Adrenal gland (tissue), 19 donors: ENCODE measurements at regions of chr11 and their contacts with region 1.

Region 1: DNA sequence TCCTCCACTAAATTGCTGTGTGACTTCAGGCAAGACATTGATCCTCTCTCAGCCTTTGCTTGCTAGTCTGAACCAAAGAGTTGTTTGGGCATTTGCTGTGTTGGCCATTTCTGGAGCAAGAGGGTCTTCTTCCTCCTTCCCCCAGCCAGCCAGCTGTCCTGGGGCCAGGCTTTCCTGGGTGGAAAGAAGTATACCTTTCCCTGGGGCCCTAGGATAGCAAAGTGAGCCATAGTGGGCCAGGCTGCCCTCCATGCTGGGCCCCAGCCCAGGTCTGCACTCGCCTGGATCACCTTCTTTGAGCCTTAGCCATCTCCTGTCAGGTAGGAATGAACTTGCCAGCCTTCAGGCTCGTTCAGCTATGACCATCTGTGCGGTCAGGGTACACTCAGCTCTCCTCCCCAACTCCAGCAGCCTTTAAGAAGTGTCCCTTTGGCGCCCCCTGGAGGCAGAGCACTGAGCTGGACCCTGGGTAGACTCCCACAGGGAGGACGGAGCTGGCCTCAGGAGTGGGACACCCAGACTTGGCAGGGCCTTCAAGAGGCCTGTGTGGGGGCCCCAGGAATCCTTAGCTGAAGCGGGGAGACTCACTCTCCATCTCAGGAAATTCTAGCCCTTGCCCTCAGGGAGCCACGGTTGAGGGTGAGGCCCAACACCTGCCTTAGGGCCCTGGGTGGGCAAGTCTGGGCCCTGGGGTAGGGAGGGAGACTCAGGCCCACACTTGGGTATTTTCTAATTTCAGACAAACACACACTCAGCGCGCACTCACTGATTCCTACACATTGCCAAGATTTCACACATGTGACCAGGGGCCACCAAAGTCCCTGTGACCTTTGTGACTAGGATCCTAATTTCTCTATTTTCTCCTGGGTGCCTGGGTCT is 35.6 kb upstream of the TPBGL start:
- DNase-seq: peak; percentile 87 to 97 (median 93)
- H3K4me3 ChIP-seq: no peak overlapping the region
- H3K27ac ChIP-seq: peak overlapping the region in 1 of 5 donors; percentile 82
- H3K4me1 ChIP-seq: peaks cover 0 to 13% of the 10 kb centered on the region in 2 donors
- H3K27me3 ChIP-seq: no peaks in the 10 kb centered on the region
- CTCF ChIP-seq: peak; percentile 87 to 93 (median 92)
- POLR2A ChIP-seq: no peak

Region 2: DNA sequence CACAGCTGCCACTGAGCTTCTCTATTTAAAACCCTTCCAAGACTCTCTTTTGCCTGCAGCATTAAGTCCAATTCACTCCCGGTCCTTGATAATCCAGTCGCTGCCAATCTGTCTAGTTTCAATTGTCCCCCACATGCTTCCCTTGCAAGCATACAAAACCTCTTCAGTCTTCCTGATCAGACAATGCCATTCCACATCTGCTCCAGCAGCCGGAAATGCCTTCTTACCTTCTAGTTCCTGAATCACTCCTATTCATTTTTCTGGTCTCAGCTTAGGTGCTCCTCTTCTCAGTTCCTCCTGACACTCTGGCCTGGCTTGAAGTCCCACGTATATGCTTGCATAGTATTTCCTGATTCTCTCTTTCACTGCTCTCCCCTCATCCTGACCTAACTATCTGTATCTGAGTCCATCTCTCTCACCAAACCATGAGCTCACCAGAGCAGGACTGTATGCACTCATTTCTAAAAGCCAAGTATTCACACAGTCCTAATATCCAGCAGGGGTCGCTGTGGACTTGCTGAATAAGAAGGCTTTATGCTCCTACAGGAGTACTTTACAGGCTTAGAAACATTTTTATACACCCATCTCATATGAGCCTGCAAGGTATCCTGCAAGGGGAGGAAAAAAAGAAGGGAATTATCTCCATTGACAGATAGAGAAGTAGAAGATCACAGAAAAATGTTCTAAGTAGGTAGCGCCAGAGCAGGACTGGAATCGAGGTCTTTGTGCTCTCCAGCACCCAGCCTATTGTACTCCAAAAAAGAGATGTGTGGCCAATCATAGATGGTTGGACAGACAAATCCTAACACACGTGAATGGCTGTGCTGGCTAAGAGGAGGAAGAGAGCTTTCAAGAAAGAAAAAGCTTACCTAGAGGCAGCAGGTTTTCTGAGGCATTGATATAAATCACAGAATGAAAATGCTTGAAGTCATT is 275.2 kb before region 1 on chr11:
- intact Hi-C with region 1: loop called in 1 of 2 experiments (anchors 5 kb)
- DNase-seq: peak; percentile 75 to 92 (median 82)
- H3K4me3 ChIP-seq: no peak overlapping the region
- H3K27ac ChIP-seq: no peak overlapping the region
- H3K4me1 ChIP-seq: no peaks in the 10 kb centered on the region
- H3K27me3 ChIP-seq: no peaks in the 10 kb centered on the region
- CTCF ChIP-seq: peak; percentile 78 to 92 (median 90)
- POLR2A ChIP-seq: no peak

Region 3: GRCh38 chr11:75022759-75023396 is 182.0 kb before region 1 on chr11:
- intact Hi-C with region 1: loop called in 1 of 2 experiments (anchors 10 kb)
- DNase-seq: peak; percentile 91 to 98 (median 96)
- H3K4me3 ChIP-seq: no peak overlapping the region
- H3K27ac ChIP-seq: peak overlapping the region; percentile 29 to 82 (median 60)
- H3K4me1 ChIP-seq: peaks cover 10 to 16% of the 10 kb centered on the region in 2 donors
- H3K27me3 ChIP-seq: no peaks in the 10 kb centered on the region
- CTCF ChIP-seq: peak; percentile 96 to 99 (median 98)
- POLR2A ChIP-seq: no peak

Region 4: DNA sequence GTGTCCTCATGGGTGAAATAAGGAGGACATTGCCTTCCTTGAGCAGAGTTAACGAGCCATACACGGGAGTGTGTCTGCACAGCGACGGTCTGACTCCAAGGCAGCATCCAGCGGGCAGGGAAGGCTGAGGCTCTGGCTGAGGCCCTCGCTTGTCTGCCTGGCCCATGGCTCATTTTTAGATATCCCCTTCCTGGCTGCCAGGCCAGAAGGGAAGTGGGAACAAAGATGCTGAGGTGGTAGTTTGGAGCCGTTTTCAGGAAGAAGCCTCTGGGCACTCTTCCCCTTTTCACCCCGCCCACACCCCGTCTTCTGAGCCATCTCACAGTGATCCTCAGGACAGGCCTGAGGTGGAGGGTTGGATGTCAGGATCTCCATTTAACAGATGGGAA is 57.1 kb before region 1 on chr11:
- intact Hi-C with region 1: loop called (anchors 2 to 5 kb)
- DNase-seq: peak in 6 of 7 donors; percentile 33 to 67 (median 54)
- H3K4me3 ChIP-seq: no peak overlapping the region
- H3K27ac ChIP-seq: peak overlapping the region in 2 of 5 donors; percentile 12 to 64
- H3K4me1 ChIP-seq: peaks cover 0 to 35% of the 10 kb centered on the region in 2 donors
- H3K27me3 ChIP-seq: no peaks in the 10 kb centered on the region
- CTCF ChIP-seq: no peak
- POLR2A ChIP-seq: no peak

Region 5: GRCh38 chr11:75160192-75160757 is 44.6 kb before region 1 on chr11:
- intact Hi-C with region 1: no loop called
- DNase-seq: peak in 2 of 7 donors; percentile 36 to 42
- H3K4me3 ChIP-seq: peak overlapping the region in 1 of 4 donors; percentile 11
- H3K27ac ChIP-seq: peak overlapping the region in 2 of 5 donors; percentile 59 to 61
- H3K4me1 ChIP-seq: peaks cover 0 to 34% of the 10 kb centered on the region in 2 donors
- H3K27me3 ChIP-seq: no peaks in the 10 kb centered on the region
- CTCF ChIP-seq: no peak
- POLR2A ChIP-seq: no peak